ENCODE measurements at regions of chr15 and their contacts with region 1.

Region 1: GRCh38 chr15:68316061-68316804 is 38.7 kb downstream of the FEM1B start:
- DNase-seq: peak in 2 of 5 donors; percentile 16 to 57
- ATAC-seq: peak in 1 of 4 donors; percentile 23
- H3K4me3 ChIP-seq: no peak overlapping the region
- H3K27ac ChIP-seq: peak overlapping the region in 1 of 12 donors; percentile 27
- H3K4me1 ChIP-seq: peaks cover 0 to 15% (median 4%) of the 10 kb centered on the region in 12 donors
- H3K27me3 ChIP-seq: no peaks in the 10 kb centered on the region
- CTCF ChIP-seq: peak in 4 of 12 donors; percentile 9 to 28 (median 10)
- POLR2A ChIP-seq: no peak

Region 2: DNA sequence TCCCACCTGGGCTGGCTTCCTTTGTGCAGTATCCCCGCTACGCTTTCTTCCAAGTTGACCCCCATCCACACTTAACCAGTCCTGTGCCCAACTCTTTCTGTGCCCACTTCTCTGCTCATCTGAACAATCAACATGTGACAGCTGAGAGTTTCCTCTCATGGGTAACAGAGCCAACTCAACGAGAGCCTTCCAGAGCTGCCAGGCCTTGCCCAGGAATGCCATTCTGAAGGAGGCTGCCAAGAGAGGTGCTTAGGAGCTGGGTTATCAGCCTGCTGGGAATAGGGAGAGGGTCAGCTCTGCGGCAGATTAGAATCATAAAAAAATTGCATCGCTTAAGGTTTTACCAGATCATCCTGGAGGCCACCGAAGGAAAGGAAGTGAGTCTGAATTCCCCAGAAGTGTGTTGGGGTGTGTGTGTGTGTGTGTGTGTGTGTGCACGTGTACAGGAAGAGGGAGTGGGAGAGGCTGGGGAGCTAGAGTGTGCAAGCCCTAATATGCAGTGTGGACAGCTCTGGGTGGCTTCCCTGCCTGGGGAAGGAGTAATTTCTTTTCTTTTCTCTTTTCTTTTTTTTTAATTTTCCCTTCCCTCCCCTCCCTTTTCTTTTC is 49.0 kb after region 1 on chr15:
- intact Hi-C with region 1: loop called in 4 of 10 experiments (anchors 5 to 10 kb)
- DNase-seq: peak in 2 of 5 donors; percentile 65 to 68
- ATAC-seq: peak; percentile 67 to 74 (median 70)
- H3K4me3 ChIP-seq: no peak overlapping the region
- H3K27ac ChIP-seq: peak overlapping the region; percentile 24 to 91 (median 86)
- H3K4me1 ChIP-seq: peaks cover 24 to 89% (median 66%) of the 10 kb centered on the region in 12 donors
- H3K27me3 ChIP-seq: no peaks in the 10 kb centered on the region
- CTCF ChIP-seq: no peak
- POLR2A ChIP-seq: no peak

Region 3: DNA sequence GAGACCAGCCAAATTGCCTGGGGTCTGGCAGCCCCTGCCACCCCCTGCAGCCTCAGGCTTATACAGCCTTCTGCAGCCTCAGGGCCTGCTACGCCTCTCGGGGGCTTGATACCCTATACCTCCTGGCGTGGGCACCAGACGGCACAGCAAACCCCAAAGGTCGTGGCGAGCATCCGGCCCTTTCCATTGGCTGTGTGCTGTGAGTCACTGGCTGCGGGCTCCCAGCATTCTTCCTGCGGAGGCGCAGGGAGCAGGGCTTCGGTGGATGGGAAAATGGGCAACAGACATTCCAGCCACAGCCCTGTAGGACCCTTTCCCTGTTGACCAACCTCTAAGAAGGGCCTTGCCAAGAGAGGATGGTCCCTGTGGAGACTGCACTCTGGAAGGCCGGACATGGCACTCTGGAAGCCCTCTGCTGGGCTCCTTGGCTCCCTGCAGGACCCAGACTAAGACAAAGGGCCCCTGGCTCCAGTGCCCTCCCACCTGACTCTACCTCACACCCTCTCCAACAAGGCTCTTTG is 56.1 kb after region 1 on chr15:
- intact Hi-C with region 1: loop called in 4 of 10 experiments (anchors 5 to 10 kb)
- DNase-seq: peak in 3 of 5 donors; percentile 25 to 53 (median 29)
- ATAC-seq: peak; percentile 29 to 66 (median 58)
- H3K4me3 ChIP-seq: no peak overlapping the region
- H3K27ac ChIP-seq: no peak overlapping the region
- H3K4me1 ChIP-seq: peaks cover 6 to 35% (median 16%) of the 10 kb centered on the region in 12 donors
- H3K27me3 ChIP-seq: no peaks in the 10 kb centered on the region
- CTCF ChIP-seq: peak; percentile 32 to 60 (median 46)
- POLR2A ChIP-seq: no peak

Region 4: DNA sequence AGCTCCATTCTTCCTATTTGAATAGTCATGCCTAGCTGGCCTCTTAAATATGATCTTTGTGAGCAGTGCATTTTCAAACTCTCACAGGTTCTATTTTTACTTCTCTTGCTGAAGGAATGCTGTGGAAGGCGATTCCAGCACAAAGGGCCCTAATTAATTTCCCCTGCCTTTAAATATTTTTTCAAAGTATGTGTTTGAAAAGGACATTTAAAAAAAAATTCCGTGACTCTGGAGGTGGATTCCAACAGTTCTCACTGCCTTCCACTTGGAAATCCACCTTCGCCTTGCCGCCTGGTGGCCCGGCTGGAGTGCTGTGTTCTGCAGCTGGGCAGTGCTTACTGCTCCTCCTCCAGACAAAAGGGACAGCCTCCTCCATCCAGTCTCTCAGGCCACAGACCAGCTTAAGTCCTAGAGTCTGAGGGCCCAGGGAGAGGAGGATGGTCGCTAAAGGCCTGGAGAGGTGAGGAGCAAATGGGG is 201.1 kb after region 1 on chr15:
- intact Hi-C with region 1: loop called in 1 of 10 experiments (anchors 10 kb)
- DNase-seq: peak in 3 of 5 donors; percentile 60 to 72 (median 60)
- ATAC-seq: peak; percentile 63 to 90 (median 86)
- H3K4me3 ChIP-seq: no peak overlapping the region
- H3K27ac ChIP-seq: peak overlapping the region in 11 of 12 donors; percentile 13 to 68 (median 41)
- H3K4me1 ChIP-seq: peaks cover 0 to 26% (median 15%) of the 10 kb centered on the region in 12 donors
- H3K27me3 ChIP-seq: no peaks in the 10 kb centered on the region
- CTCF ChIP-seq: peak in 10 of 12 donors; percentile 6 to 45 (median 32)
- POLR2A ChIP-seq: no peak

Region 5: DNA sequence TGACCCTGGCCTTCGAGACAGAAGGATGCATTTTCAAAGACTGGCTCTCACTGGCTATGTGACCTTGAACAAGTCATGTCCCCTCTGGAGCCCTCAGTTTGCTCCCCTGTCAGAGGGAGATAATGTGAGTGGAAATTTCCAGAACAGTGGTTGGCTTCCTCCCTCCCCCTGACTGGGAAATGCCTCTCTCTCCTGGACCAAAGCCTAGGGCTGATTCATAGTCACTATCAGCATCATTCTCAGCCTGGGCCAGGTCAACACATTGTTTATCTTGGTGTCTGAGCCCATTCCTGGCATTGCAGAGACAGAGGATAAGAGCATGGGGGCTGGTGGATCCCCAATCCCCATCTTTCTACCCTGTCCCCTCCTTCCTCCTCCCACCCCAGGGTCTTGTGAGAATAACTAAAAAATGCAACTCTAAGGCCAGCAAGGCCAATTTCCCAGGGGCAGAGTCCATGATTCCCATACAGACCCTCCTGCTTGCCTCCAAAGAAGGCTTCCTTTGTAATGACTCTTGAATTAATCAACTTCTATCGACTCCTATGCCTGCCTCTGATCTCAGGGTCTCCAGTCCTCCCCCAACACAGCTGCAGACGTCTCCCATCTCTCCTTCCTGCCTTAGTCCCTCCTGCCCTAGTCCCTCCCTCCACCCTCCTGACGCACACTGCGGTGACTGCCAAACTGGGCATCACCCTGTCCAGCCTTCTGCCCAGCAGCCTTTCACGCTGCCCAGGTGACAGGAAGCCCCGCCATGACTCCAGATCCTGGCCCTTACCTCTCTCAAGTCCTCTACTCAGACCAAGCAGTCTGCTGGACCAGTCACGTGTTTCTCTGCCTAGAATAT is 227.2 kb after region 1 on chr15:
- intact Hi-C with region 1: loop called in 1 of 10 experiments (anchors 5 kb)
- DNase-seq: peak in 4 of 5 donors; percentile 71 to 86 (median 79)
- ATAC-seq: peak; percentile 91 to 97 (median 96)
- H3K4me3 ChIP-seq: no peak overlapping the region
- H3K27ac ChIP-seq: peak overlapping the region in 10 of 12 donors; percentile 37 to 79 (median 58)
- H3K4me1 ChIP-seq: peaks cover 0 to 19% (median 13%) of the 10 kb centered on the region in 12 donors
- H3K27me3 ChIP-seq: no peaks in the 10 kb centered on the region
- CTCF ChIP-seq: no peak
- POLR2A ChIP-seq: no peak